ENCODE measurements at regions of chr9 and their contacts with region 1.

Region 1: DNA sequence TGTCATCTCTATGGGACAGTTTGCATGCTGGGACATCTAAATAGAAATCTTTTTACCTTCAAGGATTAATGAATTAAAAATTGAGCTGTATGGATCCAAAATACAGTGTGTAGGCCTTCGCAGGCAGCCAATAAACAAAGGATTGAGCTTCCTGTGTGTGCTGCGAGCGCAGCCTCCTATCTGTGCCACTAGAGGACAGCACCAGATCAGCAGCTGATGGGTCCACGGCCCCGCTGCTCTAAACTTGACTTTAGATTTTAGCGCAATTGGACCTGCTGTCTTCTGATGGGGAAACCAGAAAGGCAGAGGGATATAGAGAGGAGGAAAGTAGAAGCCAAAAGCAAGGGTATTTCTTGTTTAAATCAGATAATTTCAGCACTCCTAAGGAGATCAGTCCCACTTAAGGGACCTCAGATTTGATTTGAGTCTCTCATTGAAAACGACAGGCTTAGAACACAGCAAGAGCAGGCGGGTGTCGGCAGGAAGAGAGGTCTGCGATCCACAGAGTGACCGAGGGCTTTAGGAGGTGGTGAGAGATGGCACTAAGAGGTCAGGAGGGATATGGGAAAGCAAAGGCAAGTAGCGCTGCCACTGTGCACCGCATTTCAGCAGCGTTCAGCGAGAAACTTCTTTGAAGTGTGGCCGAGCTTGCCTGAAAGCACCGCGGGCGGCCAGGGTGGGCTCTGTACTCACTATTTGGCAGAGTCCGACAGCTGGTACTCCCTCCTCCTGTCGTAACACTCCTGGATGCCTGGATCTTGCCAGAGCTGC is 214.3 kb downstream of the GNA14 start:
- DNase-seq: peak; percentile 59 to 76 (median 73)
- H3K4me3 ChIP-seq: no peak overlapping the region
- H3K27ac ChIP-seq: no peak overlapping the region
- H3K4me1 ChIP-seq: no peaks in the 10 kb centered on the region
- H3K27me3 ChIP-seq: no peaks in the 10 kb centered on the region

Region 2: GRCh38 chr9:77463151-77463550 is 29.3 kb after region 1 on chr9:
- CTCF ChIA-PET with region 1: no interaction called
- POLR2A ChIA-PET with region 1: no interaction called
- DNase-seq: no peak
- H3K4me3 ChIP-seq: no peak overlapping the region
- H3K27ac ChIP-seq: no peak overlapping the region
- H3K4me1 ChIP-seq: no peaks in the 10 kb centered on the region
- H3K27me3 ChIP-seq: no peaks in the 10 kb centered on the region

Region 3: GRCh38 chr9:77751341-77752091 is 317.7 kb after region 1 on chr9:
- CTCF ChIA-PET with region 1: interaction called, 24 read pairs
- POLR2A ChIA-PET with region 1: no interaction called
- DNase-seq: peak; percentile 71 to 81 (median 80)
- H3K4me3 ChIP-seq: no peak overlapping the region
- H3K27ac ChIP-seq: no peak overlapping the region
- H3K4me1 ChIP-seq: peaks cover 0 to 12% (median 0%) of the 10 kb centered on the region in 4 experiments
- H3K27me3 ChIP-seq: no peaks in the 10 kb centered on the region